ENCODE measurements at regions of chr17 and their contacts with region 1.

Region 1: DNA sequence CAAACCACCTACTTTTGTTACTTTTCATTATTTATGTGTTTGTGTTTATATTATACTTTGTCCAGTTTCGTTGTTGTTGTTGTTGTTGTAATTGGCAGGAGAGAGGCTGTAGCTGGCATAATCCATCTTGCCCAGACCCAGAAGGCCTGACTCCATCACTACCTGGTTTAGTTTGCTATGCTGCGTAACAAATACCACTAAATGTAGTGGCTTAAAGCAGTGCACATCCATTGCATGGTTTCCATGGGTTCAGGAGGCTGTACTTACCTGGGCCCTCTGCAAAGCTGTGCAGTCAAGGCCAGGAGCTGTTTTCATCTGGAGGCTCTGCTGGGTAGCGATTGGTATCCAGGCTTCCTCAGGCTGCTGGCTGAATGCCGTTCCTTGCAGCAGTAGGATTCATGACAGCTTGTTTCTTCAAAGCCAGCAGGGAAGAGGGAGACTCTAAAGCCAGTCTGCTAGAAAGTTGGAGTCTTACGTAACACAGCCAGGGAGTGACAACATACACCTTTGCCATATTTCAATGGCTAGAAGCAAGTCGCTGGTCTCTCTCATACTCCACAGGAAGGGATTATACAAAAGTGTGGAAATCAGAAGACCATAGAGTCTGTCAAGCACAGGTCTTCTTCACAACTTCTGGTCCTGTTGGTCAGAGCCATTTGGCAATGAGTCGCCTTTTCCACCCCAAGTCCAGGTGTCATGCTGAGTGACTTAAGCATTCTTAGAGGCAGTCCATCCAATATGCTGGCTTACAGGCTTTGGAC is 41.1 kb downstream of the TNRC6C start:
- DNase-seq: no peak
- ATAC-seq: no peak
- H3K4me3 ChIP-seq: no peak overlapping the region
- H3K27ac ChIP-seq: peak overlapping the region in 3 of 10 donors; percentile 9 to 13 (median 11)
- H3K4me1 ChIP-seq: peaks cover 8 to 81% (median 46%) of the 10 kb centered on the region in 9 donors
- H3K27me3 ChIP-seq: no peaks in the 10 kb centered on the region
- CTCF ChIP-seq: no peak

Region 2: DNA sequence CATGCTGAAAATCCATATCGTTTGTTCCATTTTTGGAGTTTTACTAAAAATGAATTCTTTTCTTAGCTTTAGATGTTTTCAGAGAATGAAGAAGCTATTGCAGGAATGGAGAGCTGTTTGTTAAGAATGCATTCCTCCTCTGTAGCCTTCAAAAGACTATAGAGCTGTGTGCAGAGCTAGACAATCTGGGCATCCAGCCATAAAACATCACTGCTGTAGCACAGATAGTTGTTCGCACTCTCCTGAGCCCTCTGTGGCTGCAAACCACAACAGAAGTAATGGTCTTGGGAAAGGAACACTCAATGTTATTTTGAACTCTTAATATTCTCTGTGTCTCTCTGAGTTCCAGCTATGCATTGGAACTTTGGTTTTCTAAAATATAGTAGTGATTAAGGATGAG is 36.2 kb before region 1 on chr17:
- intact Hi-C with region 1: loop called in 4 of 10 experiments (anchors 5 kb)
- DNase-seq: peak in 1 of 2 donors; percentile 79
- ATAC-seq: peak; percentile 58 to 86 (median 72)
- H3K4me3 ChIP-seq: no peak overlapping the region
- H3K27ac ChIP-seq: peak overlapping the region in 3 of 10 donors; percentile 10 to 35 (median 16)
- H3K4me1 ChIP-seq: peaks cover 2 to 86% (median 70%) of the 10 kb centered on the region in 9 donors
- H3K27me3 ChIP-seq: peaks cover 0 to 13% (median 0%) of the 10 kb centered on the region in 7 donors
- CTCF ChIP-seq: no peak

Region 3: GRCh38 chr17:77974396-77974795 is 25.2 kb before region 1 on chr17:
- intact Hi-C with region 1: no loop called
- DNase-seq: no peak
- ATAC-seq: no peak
- H3K4me3 ChIP-seq: no peak overlapping the region
- H3K27ac ChIP-seq: no peak overlapping the region
- H3K4me1 ChIP-seq: peaks cover 0 to 37% (median 17%) of the 10 kb centered on the region in 9 donors
- H3K27me3 ChIP-seq: no peaks in the 10 kb centered on the region
- CTCF ChIP-seq: no peak

Region 4: DNA sequence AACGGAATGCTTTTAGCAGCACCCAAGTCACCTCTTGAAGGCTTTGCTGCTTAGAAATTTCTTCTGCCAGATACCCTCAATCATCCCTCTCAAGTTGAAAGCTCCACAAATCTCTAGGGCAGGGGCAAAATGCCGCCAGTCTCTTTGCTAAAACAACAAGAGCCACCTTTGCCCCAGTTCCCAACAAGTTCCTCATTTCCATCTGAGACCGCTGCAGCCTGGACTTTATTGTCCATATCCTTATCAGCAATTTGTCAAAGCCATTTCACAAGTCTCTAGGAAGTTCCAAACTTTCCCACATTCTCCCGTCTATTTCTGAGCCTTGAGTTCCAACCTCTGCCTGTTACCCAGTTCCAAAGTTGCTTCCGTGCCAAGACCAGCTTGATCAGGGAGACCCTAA is 101.5 kb after region 1 on chr17:
- intact Hi-C with region 1: no loop called
- DNase-seq: no peak
- ATAC-seq: no peak
- H3K4me3 ChIP-seq: no peak overlapping the region
- H3K27ac ChIP-seq: no peak overlapping the region
- H3K4me1 ChIP-seq: no peaks in the 10 kb centered on the region
- H3K27me3 ChIP-seq: no peaks in the 10 kb centered on the region
- CTCF ChIP-seq: no peak